ENCODE measurements at regions of chr21 and their contacts with region 1.

Region 1: GRCh38 chr21:42424914-42425541 is 21.3 kb downstream of the UBASH3A start:
- DNase-seq: peak; percentile 76

Region 2: DNA sequence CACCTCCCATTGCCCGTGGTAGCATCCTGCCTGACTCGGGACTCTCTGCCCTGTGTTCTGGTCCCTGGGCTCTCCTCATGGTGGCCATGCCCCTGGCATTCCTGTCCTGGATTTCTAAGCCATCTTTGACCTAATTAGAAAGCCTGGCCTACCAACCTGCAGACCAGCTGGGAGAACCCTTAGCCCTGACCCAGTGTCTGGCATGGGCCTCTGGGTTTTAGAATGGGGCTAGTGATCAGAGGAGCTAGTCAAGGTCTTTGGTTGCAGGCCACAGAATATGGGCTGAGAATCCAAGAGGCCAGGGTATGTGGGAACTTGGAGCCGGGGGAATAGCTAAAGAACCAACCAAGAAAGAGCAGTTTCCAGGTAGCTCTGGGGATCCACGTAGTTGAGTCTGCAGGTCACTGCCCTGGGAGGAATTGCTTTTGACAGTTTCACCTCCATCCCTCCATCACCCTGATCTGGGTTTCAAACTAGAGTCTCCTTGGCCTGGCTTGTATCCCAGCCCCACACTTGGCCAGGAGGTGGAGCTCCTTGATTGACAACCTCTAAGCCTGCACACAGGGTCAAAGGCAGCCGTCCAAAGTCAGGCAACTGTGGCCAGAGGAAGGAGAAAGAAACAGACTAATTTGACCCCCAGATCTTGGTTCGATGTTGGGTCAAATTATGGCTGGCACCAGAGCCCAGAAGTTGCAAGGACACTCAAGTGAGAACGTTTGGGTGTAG is 260.8 kb before region 1 on chr21:
- in situ Hi-C with region 1: loop called (anchors 25 kb)
- DNase-seq: peak; percentile 55

Region 3: GRCh38 chr21:42248783-42249597 is 176.0 kb before region 1 on chr21:
- in situ Hi-C with region 1: no loop called
- DNase-seq: no peak